Activated T-helper 1 cell treated with anti-CD3 and anti-CD28 coated beads, Interleukin-12 subunit alpha, Interleukin-12 subunit beta, Interleukin-2, Interleukin-4 antibody, amounts not matched to agents 30 ng/mL and 10 ng/mL and 1 ng/mL, durations not matched to agents 14 hours and 24 hours and 36 hours (primary cell): ENCODE measurements at regions of chr4 and their contacts with region 1.

Region 1: GRCh38 chr4:70839589-70840093 is at the start of gene GRSF1:
- DNase-seq: peak; percentile 89
- H3K4me3 Mint-ChIP-seq: peak within 1 kb of the TSS; percentile 99
- H3K27ac Mint-ChIP-seq: peak within 1 kb of the TSS; percentile 100
- H3K4me1 Mint-ChIP-seq: peaks cover 20% of the 10 kb centered on the region
- H3K27me3 Mint-ChIP-seq: no peaks in the 10 kb centered on the region
- total RNA-seq, gene GRSF1: 124 and 133 TPM in 2 replicates

Region 2: GRCh38 chr4:70629469-70630090 is 210.1 kb before region 1 on chr4:
- intact Hi-C with region 1: loop called (anchors 10 kb)
- DNase-seq: no peak
- H3K4me3 Mint-ChIP-seq: no peak overlapping the region
- H3K27ac Mint-ChIP-seq: no peak overlapping the region
- H3K4me1 Mint-ChIP-seq: no peaks in the 10 kb centered on the region
- H3K27me3 Mint-ChIP-seq: peaks cover 17% of the 10 kb centered on the region

Region 3: GRCh38 chr4:70801265-70801809 is 38.3 kb before region 1 on chr4:
- intact Hi-C with region 1: loop called (anchors 5 kb)
- DNase-seq: peak; percentile 1
- H3K4me3 Mint-ChIP-seq: no peak overlapping the region
- H3K27ac Mint-ChIP-seq: peak overlapping the region; percentile 33
- H3K4me1 Mint-ChIP-seq: peaks cover 21% of the 10 kb centered on the region
- H3K27me3 Mint-ChIP-seq: no peaks in the 10 kb centered on the region

Region 4: DNA sequence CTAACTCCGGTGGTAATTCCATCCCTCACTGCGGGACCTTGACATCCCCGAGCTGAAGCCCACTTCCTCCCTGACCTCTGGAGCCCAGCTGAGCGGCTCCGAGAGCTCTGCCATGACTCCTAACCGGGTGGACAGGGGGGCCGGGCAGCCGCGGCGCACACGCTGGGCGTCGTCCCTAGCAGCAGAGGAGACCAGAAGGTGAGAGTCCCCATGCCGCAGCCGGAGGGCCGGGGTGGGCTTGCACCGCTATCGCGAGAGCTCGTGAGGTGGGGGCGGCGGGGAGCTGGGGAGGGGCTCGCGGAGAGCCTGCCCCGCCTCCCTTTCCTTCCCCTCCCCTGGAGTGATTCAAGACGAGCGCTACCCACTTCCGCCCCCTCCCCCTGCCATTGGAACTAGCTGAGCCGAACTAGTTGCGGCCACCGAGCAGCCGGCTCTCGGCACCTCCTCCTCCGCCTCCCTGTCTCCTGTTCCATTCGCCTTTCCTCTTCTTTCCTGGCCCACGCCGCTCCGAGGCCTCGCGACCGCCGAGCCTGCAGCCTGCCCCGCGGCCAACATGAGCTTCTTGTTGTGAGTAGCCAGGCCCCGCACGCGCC is 62.4 kb after region 1 on chr4 and contains the start of gene MOB1B:
- intact Hi-C with region 1: loop called (anchors 1 kb)
- DNase-seq: peak; percentile 81
- H3K4me3 Mint-ChIP-seq: peak within 1 kb of the TSS; percentile 98
- H3K27ac Mint-ChIP-seq: peak within 1 kb of the TSS; percentile 93
- H3K4me1 Mint-ChIP-seq: peaks cover 25% of the 10 kb centered on the region
- H3K27me3 Mint-ChIP-seq: no peaks in the 10 kb centered on the region
- total RNA-seq, gene MOB1B: 22.1 and 23.1 TPM in 2 replicates

Region 5: GRCh38 chr4:70993181-70994068 is 153.8 kb after region 1 on chr4 and contains the start of gene DCK:
- intact Hi-C with region 1: loop called (anchors 1 kb)
- DNase-seq: peak; percentile 85
- H3K4me3 Mint-ChIP-seq: peak within 1 kb of the TSS; percentile 97
- H3K27ac Mint-ChIP-seq: peak within 1 kb of the TSS; percentile 83
- H3K4me1 Mint-ChIP-seq: peaks cover 53% of the 10 kb centered on the region
- H3K27me3 Mint-ChIP-seq: no peaks in the 10 kb centered on the region
- total RNA-seq, gene DCK: 35.6 and 37.3 TPM in 2 replicates